Heart right ventricle (tissue), 16 donors: ENCODE measurements at regions of chr5 and their contacts with region 1.

Region 1: DNA sequence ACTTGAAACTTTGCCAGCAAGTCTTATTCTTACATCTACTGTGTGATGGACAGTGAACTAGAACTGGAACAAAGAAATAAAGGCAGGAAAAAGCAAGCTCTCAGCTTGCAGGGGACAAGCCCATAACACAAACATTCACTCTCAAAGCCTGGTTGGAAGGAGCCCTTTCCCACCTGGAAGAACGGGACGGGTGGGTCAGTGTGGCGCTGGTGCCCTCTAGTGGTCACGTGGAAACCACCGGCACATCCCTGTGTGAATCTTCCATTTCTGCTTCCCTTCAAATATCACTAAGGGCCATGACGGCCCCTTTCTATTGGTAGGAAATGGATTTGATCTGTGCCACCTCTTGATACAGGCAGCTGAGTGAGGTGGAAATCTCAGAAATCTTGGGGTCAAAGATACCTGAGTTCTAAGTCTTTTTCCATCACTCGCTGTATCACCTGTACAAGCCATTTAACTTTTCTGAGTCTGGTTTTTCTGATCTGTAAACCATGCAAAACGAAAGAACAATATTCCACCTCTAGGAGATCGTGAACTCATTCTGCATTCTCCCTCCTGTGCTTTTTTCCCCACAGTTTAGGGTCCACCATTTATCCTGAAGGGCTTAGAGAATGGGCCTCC is 211.6 kb downstream of the MSX2 start:
- DNase-seq: peak; percentile 39 to 54
- ATAC-seq: peak; percentile 60 to 81 (median 66)
- H3K4me3 ChIP-seq: no peak overlapping the region
- H3K27ac ChIP-seq: no peak overlapping the region
- H3K4me1 ChIP-seq: no peaks in the 10 kb centered on the region
- H3K27me3 ChIP-seq: peaks cover 0 to 17% (median 1%) of the 10 kb centered on the region in 7 donors
- CTCF ChIP-seq: peak; percentile 66 to 91 (median 88)

Region 2: GRCh38 chr5:174327317-174328236 is 608.4 kb before region 1 on chr5:
- intact Hi-C with region 1: loop called in 2 of 10 experiments (anchors 10 kb)
- DNase-seq: peak; percentile 42 to 63
- ATAC-seq: peak in 7 of 8 donors; percentile 20 to 70 (median 57)
- H3K4me3 ChIP-seq: no peak overlapping the region
- H3K27ac ChIP-seq: no peak overlapping the region
- H3K4me1 ChIP-seq: no peaks in the 10 kb centered on the region
- H3K27me3 ChIP-seq: peaks cover 0 to 65% (median 17%) of the 10 kb centered on the region in 7 donors
- CTCF ChIP-seq: peak in 8 of 9 donors; percentile 46 to 74 (median 69)

Region 3: GRCh38 chr5:174338185-174339010 is 597.6 kb before region 1 on chr5:
- intact Hi-C with region 1: loop called in 1 of 10 experiments (anchors 10 kb)
- DNase-seq: no peak
- ATAC-seq: peak in 4 of 8 donors; percentile 39 to 74 (median 52)
- H3K4me3 ChIP-seq: no peak overlapping the region
- H3K27ac ChIP-seq: peak overlapping the region in 1 of 10 donors; percentile 18
- H3K4me1 ChIP-seq: peaks cover 0 to 16% (median 7%) of the 10 kb centered on the region in 9 donors
- H3K27me3 ChIP-seq: peaks cover 0 to 38% (median 27%) of the 10 kb centered on the region in 7 donors
- CTCF ChIP-seq: no peak

Region 4: DNA sequence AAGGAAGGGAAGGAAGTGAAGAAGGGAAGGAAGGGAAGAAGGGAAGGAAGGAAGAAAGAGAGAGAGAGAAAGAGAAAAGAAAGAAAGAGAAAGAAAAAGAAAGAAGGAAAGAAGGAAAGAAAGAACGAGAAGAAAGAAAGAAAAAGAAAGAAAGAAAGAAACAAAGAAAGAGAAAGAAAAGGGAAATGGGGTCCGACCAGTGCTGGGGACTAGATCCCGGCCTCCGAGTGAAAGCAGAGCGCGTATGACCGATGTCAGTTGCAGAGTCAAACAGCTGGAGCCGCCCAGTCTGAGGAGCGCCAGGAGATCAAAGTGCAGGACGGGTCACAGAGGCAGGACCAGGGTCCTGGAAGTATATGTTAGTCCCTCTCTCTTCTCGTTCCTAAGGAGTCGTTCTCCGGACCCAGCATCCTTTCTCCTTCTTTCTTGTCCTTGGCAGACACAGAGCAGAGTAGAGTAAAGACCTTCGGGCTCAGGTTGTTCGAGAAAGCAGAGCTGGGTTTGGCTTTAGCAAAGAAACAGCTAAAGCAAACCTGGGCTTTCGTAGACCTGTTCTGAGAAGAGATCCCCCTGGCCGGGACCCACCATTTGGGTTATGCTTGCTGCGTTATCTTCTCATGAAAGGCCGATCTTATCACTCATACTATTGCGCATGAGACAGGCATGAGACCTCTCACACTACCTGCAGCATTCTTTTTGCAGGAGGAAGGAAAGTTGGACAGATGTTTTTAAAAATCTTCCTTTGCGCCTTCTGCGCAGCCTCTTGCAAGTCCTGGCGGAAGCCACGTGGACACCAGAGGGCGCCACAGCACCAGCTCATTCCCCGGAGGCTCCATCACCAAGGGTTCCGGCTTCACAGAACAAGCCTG is 516.8 kb before region 1 on chr5:
- intact Hi-C with region 1: loop called in 7 of 10 experiments (anchors 5 to 10 kb)
- DNase-seq: peak; percentile 85 to 89
- ATAC-seq: peak; percentile 81 to 96 (median 92)
- H3K4me3 ChIP-seq: peak overlapping the region in 6 of 10 donors; percentile 25 to 34 (median 30)
- H3K27ac ChIP-seq: peak overlapping the region in 1 of 10 donors; percentile 58
- H3K4me1 ChIP-seq: peaks cover 0 to 8% (median 6%) of the 10 kb centered on the region in 9 donors
- H3K27me3 ChIP-seq: peaks cover 0 to 66% (median 42%) of the 10 kb centered on the region in 7 donors
- CTCF ChIP-seq: peak; percentile 54 to 95 (median 89)

Region 5: GRCh38 chr5:174424219-174425053 is 511.5 kb before region 1 on chr5:
- intact Hi-C with region 1: loop called in 8 of 10 experiments (anchors 5 to 10 kb)
- DNase-seq: no peak
- ATAC-seq: no peak
- H3K4me3 ChIP-seq: no peak overlapping the region
- H3K27ac ChIP-seq: no peak overlapping the region
- H3K4me1 ChIP-seq: peaks cover 0 to 6% (median under 1%) of the 10 kb centered on the region in 9 donors
- H3K27me3 ChIP-seq: peaks cover 0 to 33% (median 13%) of the 10 kb centered on the region in 7 donors
- CTCF ChIP-seq: no peak

Region 6: DNA sequence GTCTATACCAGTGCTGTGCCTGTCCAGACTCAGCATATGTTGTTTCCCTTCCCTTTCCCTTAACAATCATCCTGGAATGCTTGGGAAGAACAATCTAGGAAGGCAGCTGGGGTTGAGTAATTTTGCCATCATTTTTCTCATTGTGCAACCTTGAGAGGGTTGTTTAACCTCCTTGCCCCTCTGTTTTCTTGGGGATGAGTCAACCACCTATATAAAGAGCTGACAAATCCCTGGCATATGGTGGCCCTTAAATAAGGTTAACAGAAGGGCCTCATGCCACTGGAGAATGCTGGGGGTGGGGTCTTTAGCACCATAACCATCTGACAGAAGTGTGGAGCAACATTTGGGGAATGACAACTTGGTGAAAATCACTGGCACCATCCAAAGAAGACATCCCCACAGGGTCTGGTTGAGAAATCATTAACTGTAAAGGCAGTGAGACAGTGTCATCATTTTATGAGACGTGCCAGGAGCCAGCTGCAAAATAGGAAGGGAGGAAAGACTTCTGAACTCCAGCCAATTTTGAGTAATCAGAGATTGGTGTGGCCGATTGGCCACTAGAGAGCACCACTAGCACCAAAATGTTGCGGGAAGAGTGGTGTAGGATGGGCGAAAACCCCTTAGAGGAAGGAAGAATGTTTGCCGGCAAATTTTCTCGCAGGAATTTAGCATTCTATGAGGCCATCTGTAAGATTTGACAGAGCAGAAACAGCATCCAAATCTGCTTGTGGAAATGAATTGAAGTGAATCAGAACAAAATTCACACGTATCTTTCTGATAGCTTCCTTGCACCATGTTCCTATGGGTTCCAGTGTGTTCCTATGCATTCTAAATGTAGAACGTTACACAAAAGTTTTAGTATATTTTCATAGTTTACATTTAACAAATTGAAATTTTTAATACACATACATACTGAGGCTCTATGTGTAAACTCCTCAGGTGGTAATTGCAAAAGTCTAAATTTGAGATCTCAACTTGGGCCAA is 97.8 kb before region 1 on chr5:
- intact Hi-C with region 1: no loop called
- DNase-seq: no peak
- ATAC-seq: peak in 1 of 8 donors; percentile 87
- H3K4me3 ChIP-seq: no peak overlapping the region
- H3K27ac ChIP-seq: peak overlapping the region in 2 of 10 donors; percentile 19 to 31
- H3K4me1 ChIP-seq: peaks cover 0 to 9% (median 0%) of the 10 kb centered on the region in 9 donors
- H3K27me3 ChIP-seq: peaks cover 0 to 18% (median 0%) of the 10 kb centered on the region in 7 donors
- CTCF ChIP-seq: peak in 3 of 9 donors; percentile 33 to 35 (median 33)

Region 7: DNA sequence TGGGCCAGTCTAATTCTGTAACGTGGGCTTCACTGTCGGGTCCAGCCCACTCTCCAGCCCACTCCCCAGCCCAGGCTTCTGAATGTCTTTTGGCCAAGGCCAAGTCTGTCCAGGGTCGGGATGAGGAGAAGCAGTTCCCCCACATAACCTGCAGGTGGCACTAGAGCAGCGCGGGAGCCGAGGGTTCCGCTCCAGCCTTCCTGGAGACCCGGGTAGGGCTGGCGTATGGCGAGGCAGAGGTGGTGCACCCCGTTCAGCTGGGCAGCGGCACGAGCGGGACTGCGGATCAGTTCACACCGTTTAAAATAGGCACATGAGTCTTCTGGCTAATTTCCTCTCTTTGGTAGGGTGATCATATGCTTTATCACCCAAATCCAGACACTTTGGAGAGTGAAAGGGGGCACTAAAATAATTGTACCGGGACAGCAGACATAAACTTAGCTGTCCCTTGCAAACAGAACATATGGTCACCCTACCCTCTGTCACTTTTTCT is 25.7 kb before region 1 on chr5:
- intact Hi-C with region 1: loop called in 4 of 10 experiments (anchors 1 to 2 kb)
- DNase-seq: peak; percentile 57 to 59
- ATAC-seq: peak; percentile 65 to 94 (median 86)
- H3K4me3 ChIP-seq: peak overlapping the region in 2 of 10 donors; percentile 5 to 17
- H3K27ac ChIP-seq: no peak overlapping the region
- H3K4me1 ChIP-seq: peaks cover 0 to 4% (median 0%) of the 10 kb centered on the region in 9 donors
- H3K27me3 ChIP-seq: peaks cover 0 to 9% (median 0%) of the 10 kb centered on the region in 7 donors
- CTCF ChIP-seq: peak; percentile 76 to 92 (median 90)

Region 8: GRCh38 chr5:175001876-175002645 is 66.1 kb after region 1 on chr5:
- intact Hi-C with region 1: no loop called
- DNase-seq: no peak
- ATAC-seq: no peak
- H3K4me3 ChIP-seq: no peak overlapping the region
- H3K27ac ChIP-seq: no peak overlapping the region
- H3K4me1 ChIP-seq: no peaks in the 10 kb centered on the region
- H3K27me3 ChIP-seq: peaks cover 0 to 27% (median 13%) of the 10 kb centered on the region in 7 donors
- CTCF ChIP-seq: no peak